A673 (cell line): ENCODE measurements at regions of chr15 and their contacts with region 1.

Region 1: GRCh38 chr15:51281368-51281967 is 56.9 kb downstream of the CYP19A1 start:
- DNase-seq: peak; percentile 64
- H3K4me3 ChIP-seq: no peak overlapping the region
- H3K27ac ChIP-seq: no peak overlapping the region
- H3K4me1 ChIP-seq: no peaks in the 10 kb centered on the region
- H3K27me3 ChIP-seq: peaks cover 30% of the 10 kb centered on the region
- CTCF ChIP-seq: peak; percentile 80

Region 2: DNA sequence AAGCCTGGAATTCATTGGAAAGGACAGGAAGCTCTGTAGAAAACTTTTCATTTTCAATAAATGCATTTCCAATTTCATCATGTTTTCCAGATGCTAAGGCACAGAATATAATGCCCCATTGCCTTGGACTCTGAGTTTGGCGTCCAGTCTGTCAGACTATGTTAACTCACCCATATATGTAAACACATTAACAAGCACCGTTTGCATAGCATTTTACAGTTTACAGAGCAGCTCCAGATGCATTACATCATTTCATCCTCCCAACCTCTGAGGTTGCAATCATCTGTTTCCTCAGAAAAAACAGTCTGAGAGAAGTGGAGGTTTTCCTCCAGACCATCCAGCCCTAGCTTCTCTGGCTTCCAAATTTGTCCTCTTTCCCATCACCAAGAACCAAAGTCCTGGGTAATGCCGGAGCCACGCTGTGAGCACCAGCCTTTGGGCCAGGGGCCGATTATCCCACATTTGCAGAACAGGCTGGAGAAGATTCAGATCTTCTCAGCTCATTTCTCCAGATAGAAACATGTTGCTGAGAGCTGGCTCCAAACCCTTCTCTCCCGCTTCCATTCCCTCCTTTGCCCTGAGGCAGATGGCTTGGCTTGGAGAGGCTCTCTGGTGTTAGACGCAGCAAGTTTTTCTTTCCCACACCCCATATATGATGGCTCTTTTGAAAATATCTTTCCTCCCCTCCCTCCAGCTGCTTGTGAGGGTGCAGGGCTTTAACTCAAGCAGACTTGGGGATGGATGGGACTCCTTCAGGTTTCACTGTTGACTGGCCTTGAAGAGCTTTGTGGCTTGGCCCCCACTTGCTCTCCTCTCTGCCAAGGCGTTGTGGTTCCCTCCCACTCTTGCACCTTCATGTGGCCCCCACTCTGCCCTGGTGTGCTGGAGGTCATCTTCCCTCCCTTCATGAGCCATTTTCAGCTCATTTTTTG is 31.0 kb after region 1 on chr15:
- CTCF ChIA-PET with region 1: no interaction called
- POLR2A ChIA-PET with region 1: no interaction called
- intact Hi-C with region 1: no loop called
- DNase-seq: no peak
- H3K4me3 ChIP-seq: no peak overlapping the region
- H3K27ac ChIP-seq: no peak overlapping the region
- H3K4me1 ChIP-seq: no peaks in the 10 kb centered on the region
- H3K27me3 ChIP-seq: no peaks in the 10 kb centered on the region
- CTCF ChIP-seq: no peak

Region 3: GRCh38 chr15:51380999-51381795 is 99.7 kb after region 1 on chr15:
- CTCF ChIA-PET with region 1: interaction called, 8 read pairs
- POLR2A ChIA-PET with region 1: no interaction called
- intact Hi-C with region 1: loop called (anchors 1 kb)
- DNase-seq: peak; percentile 62
- H3K4me3 ChIP-seq: no peak overlapping the region
- H3K27ac ChIP-seq: no peak overlapping the region
- H3K4me1 ChIP-seq: no peaks in the 10 kb centered on the region
- H3K27me3 ChIP-seq: no peaks in the 10 kb centered on the region
- CTCF ChIP-seq: peak; percentile 77

Region 4: GRCh38 chr15:51499379-51499976 is 218.0 kb after region 1 on chr15:
- CTCF ChIA-PET with region 1: no interaction called
- POLR2A ChIA-PET with region 1: no interaction called
- intact Hi-C with region 1: loop called (anchors 1 kb)
- DNase-seq: peak; percentile 70
- H3K4me3 ChIP-seq: no peak overlapping the region
- H3K27ac ChIP-seq: no peak overlapping the region
- H3K4me1 ChIP-seq: no peaks in the 10 kb centered on the region
- H3K27me3 ChIP-seq: no peaks in the 10 kb centered on the region
- CTCF ChIP-seq: peak; percentile 77